ENCODE measurements at regions of chr4 and their contacts with region 1.

Region 1: GRCh38 chr4:78517050-78517652 is 34.4 kb upstream of the ANXA3 start:
- DNase-seq: no peak
- ATAC-seq: peak; percentile 76
- H3K4me3 ChIP-seq: no peak overlapping the region
- H3K27ac ChIP-seq: no peak overlapping the region
- H3K4me1 ChIP-seq: no peaks in the 10 kb centered on the region
- H3K27me3 ChIP-seq: no peaks in the 10 kb centered on the region
- CTCF ChIP-seq: peak; percentile 49 to 70 (median 64); a peak in 5 of 6 replicates
- POLR2A ChIP-seq: no peak
- RAD21 ChIP-seq: peak; percentile 77

Region 2: DNA sequence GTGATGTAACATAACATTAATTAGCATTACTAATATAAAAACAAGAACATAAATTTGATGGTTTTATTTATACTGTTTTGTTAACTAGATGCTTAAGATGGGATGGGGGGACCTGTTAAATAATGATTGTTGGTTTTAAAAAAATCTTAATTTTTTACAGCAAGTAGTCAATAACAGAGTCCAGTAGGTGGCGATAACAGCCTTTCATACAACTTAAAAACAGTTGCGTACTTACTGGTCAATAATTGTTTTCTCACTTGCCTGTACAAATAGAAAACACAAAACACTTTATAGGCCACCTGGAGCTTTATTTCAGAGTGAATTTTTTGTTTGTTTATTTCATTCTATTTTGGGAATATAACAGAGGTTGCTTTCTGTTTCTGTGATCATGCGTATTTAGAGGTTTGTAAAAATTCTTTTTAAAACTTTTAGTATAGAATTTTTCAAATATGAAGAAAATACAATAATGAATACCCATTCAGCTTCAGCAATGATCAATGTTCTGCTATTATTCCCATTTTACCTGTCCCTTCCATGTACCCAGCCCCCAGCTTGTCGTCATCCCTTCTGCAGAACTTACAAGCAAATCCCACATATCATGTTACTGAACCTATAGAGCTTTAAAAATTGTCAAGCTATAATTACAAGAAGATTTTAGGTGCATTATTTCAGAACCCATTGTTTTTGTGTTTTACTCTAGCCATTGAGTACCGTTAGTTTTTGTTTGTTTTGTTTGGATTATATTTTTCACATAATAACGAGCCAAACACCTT is 557.4 kb before region 1 on chr4:
- CTCF ChIA-PET with region 1: no interaction called
- POLR2A ChIA-PET with region 1: no interaction called
- RAD21 ChIA-PET with region 1: no interaction called
- intact Hi-C with region 1: loop called (anchors 1 kb)
- DNase-seq: peak; percentile 51
- ATAC-seq: peak; percentile 54
- H3K4me3 ChIP-seq: no peak overlapping the region
- H3K27ac ChIP-seq: no peak overlapping the region
- H3K4me1 ChIP-seq: no peaks in the 10 kb centered on the region
- H3K27me3 ChIP-seq: no peaks in the 10 kb centered on the region
- CTCF ChIP-seq: peak; percentile 50 to 74 (median 59); a peak in 5 of 6 replicates
- POLR2A ChIP-seq: no peak
- RAD21 ChIP-seq: peak; percentile 79

Region 3: GRCh38 chr4:77994194-77994721 is 522.9 kb before region 1 on chr4:
- CTCF ChIA-PET with region 1: interaction called, 4 read pairs
- POLR2A ChIA-PET with region 1: no interaction called
- RAD21 ChIA-PET with region 1: interaction called in 1 of 2 experiments, 3 read pairs
- intact Hi-C with region 1: loop called (anchors 1 kb)
- DNase-seq: peak; percentile 71
- ATAC-seq: peak; percentile 98
- H3K4me3 ChIP-seq: no peak overlapping the region
- H3K27ac ChIP-seq: no peak overlapping the region
- H3K4me1 ChIP-seq: peaks cover 0 to 9% of the 10 kb centered on the region in 2 experiments; a peak in 1 of 4 replicates
- H3K27me3 ChIP-seq: no peaks in the 10 kb centered on the region
- CTCF ChIP-seq: peak in 2 of 3 experiments; percentile 79 to 82; a peak in 5 of 6 replicates
- POLR2A ChIP-seq: no peak
- RAD21 ChIP-seq: peak; percentile 69

Region 4: GRCh38 chr4:78737035-78737434 is 219.9 kb after region 1 on chr4:
- CTCF ChIA-PET with region 1: no interaction called
- POLR2A ChIA-PET with region 1: no interaction called
- RAD21 ChIA-PET with region 1: no interaction called
- intact Hi-C with region 1: no loop called
- DNase-seq: no peak
- ATAC-seq: no peak
- H3K4me3 ChIP-seq: no peak overlapping the region
- H3K27ac ChIP-seq: no peak overlapping the region
- H3K4me1 ChIP-seq: no peaks in the 10 kb centered on the region
- H3K27me3 ChIP-seq: no peaks in the 10 kb centered on the region
- CTCF ChIP-seq: no peak
- POLR2A ChIP-seq: no peak
- RAD21 ChIP-seq: no peak